ENCODE measurements at regions of chr16 and their contacts with region 1.

Region 1: GRCh38 chr16:89556750-89557689 is 3.5 kb upstream of the RPL13 start:
- DNase-seq: peak; percentile 90
- ATAC-seq: peak; percentile 79
- H3K4me3 ChIP-seq: no peak overlapping the region
- H3K27ac ChIP-seq: peak overlapping the region; percentile 49
- H3K4me1 ChIP-seq: peaks cover 34% of the 10 kb centered on the region
- H3K27me3 ChIP-seq: no peaks in the 10 kb centered on the region
- CTCF ChIP-seq: peak; percentile 97
- EP300 ChIP-seq: no peak
- POLR2A ChIP-seq: 0 out of 4 replicates have a peak, but pooled peaks of 1 of the 2 experiments have one; percentile 28
- RAD21 ChIP-seq: peak; percentile 91

Region 2: DNA sequence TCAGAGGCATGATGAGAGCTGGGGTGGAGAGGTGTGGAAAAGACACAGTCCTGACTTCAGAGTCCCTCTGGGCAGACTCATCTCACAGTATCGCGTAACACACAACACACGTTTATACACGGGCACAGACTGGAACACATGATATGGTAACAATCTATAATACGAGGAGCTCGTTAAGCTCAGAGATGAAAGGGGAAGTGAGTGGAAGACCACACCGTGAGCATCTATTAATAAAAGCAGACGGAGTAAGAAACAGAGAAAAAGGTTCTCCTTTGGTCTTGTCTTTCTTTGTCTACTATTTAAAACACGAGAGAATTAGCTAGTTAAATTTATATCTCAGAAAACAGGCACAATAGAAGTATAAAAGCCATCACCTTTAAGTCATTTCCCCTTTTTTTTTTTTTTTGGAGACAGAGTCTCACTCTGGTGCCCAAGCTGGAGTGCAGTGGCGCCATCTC is 80.2 kb before region 1 on chr16:
- CTCF ChIA-PET with region 1: no interaction called
- POLR2A ChIA-PET with region 1: no interaction called
- in situ Hi-C with region 1: no loop called
- intact Hi-C with region 1: no loop called
- DNase-seq: no peak
- ATAC-seq: no peak
- H3K4me3 ChIP-seq: no peak overlapping the region
- H3K27ac ChIP-seq: no peak overlapping the region
- H3K4me1 ChIP-seq: peaks cover 92% of the 10 kb centered on the region
- H3K27me3 ChIP-seq: no peaks in the 10 kb centered on the region
- CTCF ChIP-seq: no peak
- EP300 ChIP-seq: no peak
- POLR2A ChIP-seq: no peak
- RAD21 ChIP-seq: no peak

Region 3: GRCh38 chr16:89490387-89491237 is 66.4 kb before region 1 on chr16 and contains the start of gene ANKRD11:
- CTCF ChIA-PET with region 1: no interaction called
- POLR2A ChIA-PET with region 1: no interaction called
- in situ Hi-C with region 1: no loop called
- intact Hi-C with region 1: no loop called
- DNase-seq: peak; percentile 100
- ATAC-seq: peak; percentile 93
- H3K4me3 ChIP-seq: peak within 1 kb of the TSS; percentile 61 to 93 (median 85)
- H3K27ac ChIP-seq: peak within 1 kb of the TSS; percentile 81
- H3K4me1 ChIP-seq: peaks cover 59% of the 10 kb centered on the region
- H3K27me3 ChIP-seq: no peaks in the 10 kb centered on the region; a peak in 1 of 5 replicates
- CTCF ChIP-seq: no peak; the same call in 1 of the 2 replicates
- EP300 ChIP-seq: no peak
- POLR2A ChIP-seq: peak; percentile 91 to 93
- RAD21 ChIP-seq: peak; percentile 88
- total RNA-seq, gene ANKRD11: 21.4 and 24.4 TPM in 2 replicates

Region 4: DNA sequence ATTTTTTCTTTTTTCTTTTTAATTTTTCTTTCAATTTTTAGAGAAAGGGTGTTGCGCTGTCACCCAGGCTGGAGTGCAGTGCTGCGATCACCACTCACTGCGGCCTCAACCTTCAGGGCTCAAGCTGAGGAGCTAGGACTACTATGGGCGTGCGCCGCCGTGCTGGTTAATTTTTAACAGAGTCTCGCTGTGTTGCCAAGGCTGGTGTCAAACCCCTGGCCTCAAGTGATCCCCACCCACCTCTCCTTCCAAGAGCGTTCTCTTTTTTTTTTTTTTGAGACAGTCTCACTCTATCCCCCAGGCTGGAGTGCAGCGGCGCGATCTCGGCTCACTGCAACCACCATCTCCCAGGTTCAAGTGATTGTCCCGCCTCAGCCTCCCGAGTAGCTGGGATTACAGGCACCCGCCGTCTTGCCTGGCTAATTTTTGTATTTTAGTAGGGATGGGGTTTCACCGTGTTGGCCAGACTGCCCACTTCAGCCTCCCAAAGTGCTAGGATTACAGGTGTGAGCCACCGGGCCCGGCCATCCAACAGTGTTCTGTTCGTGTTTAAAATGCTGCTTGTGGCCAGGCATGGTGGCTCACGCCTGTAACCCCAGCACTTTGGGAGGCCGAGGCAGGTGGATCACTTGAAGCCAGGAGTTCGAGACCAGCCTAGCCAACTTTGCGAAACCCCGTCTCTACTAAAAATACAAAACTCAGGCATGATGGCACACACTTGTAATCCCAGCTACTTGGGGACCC is 11.0 kb before region 1 on chr16:
- CTCF ChIA-PET with region 1: no interaction called
- POLR2A ChIA-PET with region 1: interaction called, 12 read pairs
- in situ Hi-C with region 1: no loop called
- intact Hi-C with region 1: loop called (anchors 1 kb)
- DNase-seq: peak; percentile 89
- ATAC-seq: peak; percentile 87
- H3K4me3 ChIP-seq: peak overlapping the region; percentile 38 to 72 (median 41)
- H3K27ac ChIP-seq: peak overlapping the region; percentile 87
- H3K4me1 ChIP-seq: peaks cover 35% of the 10 kb centered on the region
- H3K27me3 ChIP-seq: no peaks in the 10 kb centered on the region
- CTCF ChIP-seq: no peak
- EP300 ChIP-seq: no peak
- POLR2A ChIP-seq: peak; percentile 36 to 59; a peak in 3 of 4 replicates
- RAD21 ChIP-seq: no peak

Region 5: DNA sequence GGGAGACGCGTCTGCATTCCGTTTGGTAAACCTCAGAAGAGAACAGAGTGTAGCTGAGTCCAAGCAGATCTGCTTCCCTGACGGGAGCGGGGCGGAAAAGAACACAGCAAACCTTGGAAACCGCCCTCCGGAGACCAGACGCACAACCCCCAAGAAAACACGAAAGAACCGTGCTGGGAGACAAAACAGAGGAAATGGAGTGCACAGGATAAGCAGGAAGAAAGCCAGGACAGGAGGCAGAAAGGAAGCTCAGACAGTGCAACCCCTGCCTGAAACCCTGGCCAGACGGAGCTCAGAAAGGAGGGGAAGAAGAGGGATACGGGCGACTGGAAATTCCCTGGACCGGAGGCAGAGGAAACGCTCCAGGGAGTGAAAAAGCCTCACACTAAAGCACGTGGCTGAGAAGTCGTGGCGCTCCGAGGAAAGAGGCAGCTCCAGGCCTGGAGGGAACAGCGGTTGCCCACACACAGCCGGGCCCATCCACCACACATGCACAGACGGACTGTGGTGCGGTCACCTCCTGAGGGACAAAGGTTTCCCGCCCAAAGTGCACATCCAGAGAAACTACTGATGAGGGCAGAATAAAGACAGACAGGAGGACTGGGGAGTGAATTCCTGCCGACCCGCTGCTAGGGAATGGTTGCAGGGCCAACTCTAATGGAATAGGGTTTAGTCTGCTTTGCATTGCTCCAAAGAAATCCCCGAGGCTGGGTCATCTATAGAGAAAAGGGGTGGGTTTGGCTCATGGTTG is 66.7 kb after region 1 on chr16:
- CTCF ChIA-PET with region 1: no interaction called
- POLR2A ChIA-PET with region 1: no interaction called
- in situ Hi-C with region 1: no loop called
- intact Hi-C with region 1: no loop called
- DNase-seq: peak; percentile 40
- ATAC-seq: peak; percentile 50
- H3K4me3 ChIP-seq: no peak overlapping the region
- H3K27ac ChIP-seq: peak overlapping the region; percentile 18
- H3K4me1 ChIP-seq: peaks cover 68% of the 10 kb centered on the region
- H3K27me3 ChIP-seq: peaks cover 0 to 2% of the 10 kb centered on the region in 2 experiments; a peak in 1 of 5 replicates
- CTCF ChIP-seq: no peak
- EP300 ChIP-seq: no peak
- POLR2A ChIP-seq: no peak
- RAD21 ChIP-seq: no peak

Measured in HepG2 (cell line).